CD4-positive, alpha-beta memory T cell (primary cell): ENCODE measurements at regions of chr21 and their contacts with region 1.

Region 1: GRCh38 chr21:17813353-17813752 is 5.8 kb downstream of the C21orf91 start:
- DNase-seq: no peak
- H3K4me3 ChIP-seq: no peak overlapping the region
- H3K4me3 Mint-ChIP-seq: peak overlapping the region in 5 of 8 donors; percentile 20 to 70 (median 55)
- H3K27ac ChIP-seq: no peak overlapping the region
- H3K27ac Mint-ChIP-seq: peak overlapping the region; percentile 3 to 82 (median 80)
- H3K4me1 ChIP-seq: peaks cover 72% of the 10 kb centered on the region
- H3K4me1 Mint-ChIP-seq: peaks cover 38 to 73% (median 57%) of the 10 kb centered on the region in 4 donors
- H3K27me3 ChIP-seq: no peaks in the 10 kb centered on the region
- H3K27me3 Mint-ChIP-seq: no peaks in the 10 kb centered on the region

Region 2: GRCh38 chr21:17793246-17794123 is 19.9 kb before region 1 on chr21:
- CTCF ChIA-PET with region 1: interaction called, 7 read pairs
- POLR2A ChIA-PET with region 1: interaction called, 62 read pairs
- intact Hi-C with region 1: loop called (anchors 1 kb)
- DNase-seq: peak in 4 of 5 donors; percentile 59 to 66 (median 60)
- H3K4me3 ChIP-seq: peak overlapping the region; percentile 20 to 72
- H3K4me3 Mint-ChIP-seq: peak overlapping the region; percentile 60 to 92 (median 83)
- H3K27ac ChIP-seq: peak overlapping the region; percentile 94
- H3K27ac Mint-ChIP-seq: peak overlapping the region; percentile 87 to 97 (median 92)
- H3K4me1 ChIP-seq: peaks cover 92% of the 10 kb centered on the region
- H3K4me1 Mint-ChIP-seq: peaks cover 49 to 78% (median 57%) of the 10 kb centered on the region in 4 donors
- H3K27me3 ChIP-seq: no peaks in the 10 kb centered on the region
- H3K27me3 Mint-ChIP-seq: no peaks in the 10 kb centered on the region

Region 3: DNA sequence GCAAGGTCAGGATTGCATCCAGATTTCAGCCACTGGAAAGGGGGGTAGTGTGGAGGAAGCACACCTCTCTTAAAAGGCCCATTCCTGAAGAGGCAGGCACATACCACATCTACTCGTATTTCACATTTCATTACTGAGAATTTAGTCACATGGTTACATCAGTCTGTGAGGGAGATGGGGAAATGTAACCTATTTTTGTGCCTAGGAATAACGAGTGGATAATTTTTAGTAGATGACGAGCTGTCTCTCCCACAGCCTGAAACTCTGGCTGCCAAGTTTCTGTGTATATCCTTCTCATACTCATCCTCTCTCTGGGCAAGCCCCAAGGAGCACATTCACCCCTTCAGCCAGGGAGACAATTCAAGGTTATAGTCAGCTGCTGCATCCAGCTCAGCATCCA is 16.1 kb after region 1 on chr21:
- CTCF ChIA-PET with region 1: no interaction called
- POLR2A ChIA-PET with region 1: no interaction called
- intact Hi-C with region 1: no loop called
- DNase-seq: no peak
- H3K4me3 ChIP-seq: no peak overlapping the region
- H3K4me3 Mint-ChIP-seq: no peak overlapping the region
- H3K27ac ChIP-seq: no peak overlapping the region
- H3K27ac Mint-ChIP-seq: peak overlapping the region in 1 of 7 donors; percentile 16
- H3K4me1 ChIP-seq: no peaks in the 10 kb centered on the region
- H3K4me1 Mint-ChIP-seq: peaks cover 0 to 2% (median 0%) of the 10 kb centered on the region in 4 donors
- H3K27me3 ChIP-seq: no peaks in the 10 kb centered on the region
- H3K27me3 Mint-ChIP-seq: no peaks in the 10 kb centered on the region